ENCODE measurements at regions of chr2 and their contacts with region 1.

Region 1: DNA sequence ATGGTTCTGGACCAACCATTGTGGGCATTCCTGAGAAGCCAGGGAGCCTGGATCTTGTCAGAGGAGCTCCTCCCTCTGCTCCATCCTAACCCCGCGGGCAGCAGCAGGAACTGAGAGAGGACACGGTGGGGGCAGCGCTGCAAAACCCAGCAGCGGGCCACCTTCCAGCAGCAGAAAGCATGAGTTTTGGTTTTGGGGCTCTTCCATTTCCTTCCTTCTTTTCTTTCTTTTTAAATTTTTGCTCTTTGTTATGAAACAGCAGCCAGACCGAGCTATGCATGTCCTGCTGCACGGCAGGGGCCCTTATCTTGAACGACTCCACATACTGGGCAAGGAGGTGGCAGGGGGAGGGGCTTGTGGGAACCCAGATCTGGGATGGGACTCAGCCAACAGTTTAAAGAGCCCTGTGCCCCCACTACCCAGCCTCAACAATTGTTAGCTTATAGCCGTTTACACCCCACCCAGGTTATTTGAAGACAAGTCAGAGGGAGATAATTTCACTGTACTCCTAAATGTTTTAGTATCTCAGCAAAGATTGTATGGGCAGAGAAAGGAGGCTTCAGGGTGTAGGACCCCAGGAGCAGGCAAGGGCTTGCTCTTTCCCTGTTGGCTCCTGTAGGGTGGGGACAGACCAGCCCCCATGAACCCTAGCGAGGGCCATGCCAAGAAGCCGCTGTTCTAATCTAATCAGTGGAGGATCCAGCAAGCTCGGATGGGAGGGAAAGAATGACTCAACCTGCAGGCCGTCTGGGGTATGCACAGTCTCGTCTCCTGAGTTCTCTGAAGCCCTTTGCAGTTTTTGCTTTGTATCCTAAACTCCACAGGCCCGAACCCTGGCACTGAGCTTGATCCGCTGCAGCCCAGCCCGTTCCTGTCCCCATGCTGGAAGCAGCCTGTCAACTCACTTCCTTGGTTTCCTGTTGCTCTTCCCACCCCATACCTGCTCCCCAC is 75.3 kb downstream of the LRRFIP1 start:
- DNase-seq: peak in 1 of 10 donors; percentile 39
- ATAC-seq: peak; percentile 25 to 31
- H3K4me3 Mint-ChIP-seq: peak overlapping the region; percentile 73 to 92 (median 83)
- H3K27ac Mint-ChIP-seq: peak overlapping the region; percentile 88 to 97 (median 95)
- H3K4me1 Mint-ChIP-seq: peaks cover 57 to 99% (median 96%) of the 10 kb centered on the region in 4 donors
- H3K27me3 Mint-ChIP-seq: no peaks in the 10 kb centered on the region

Region 2: DNA sequence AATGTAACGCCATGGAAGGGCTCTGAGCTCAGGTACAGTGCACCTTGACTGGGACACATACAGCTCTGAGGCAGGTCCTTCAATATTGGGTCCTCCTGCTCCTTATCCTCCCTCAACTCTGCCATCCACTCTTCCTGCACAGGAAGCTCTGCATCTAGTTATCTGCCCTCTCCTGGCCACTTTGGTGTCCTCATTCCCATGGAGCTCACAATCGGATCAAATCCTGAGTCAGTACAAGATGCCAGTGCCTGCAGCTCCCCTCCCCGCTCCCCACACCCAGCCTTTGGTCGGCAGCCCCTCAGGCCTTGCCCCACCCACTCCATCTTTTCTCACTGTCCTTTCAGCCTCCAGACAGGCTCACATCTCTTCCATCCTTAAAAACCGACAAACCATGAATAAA is 17.3 kb before region 1 on chr2:
- POLR2A ChIA-PET with region 1: interaction called, 14 read pairs
- DNase-seq: no peak
- ATAC-seq: no peak
- H3K4me3 Mint-ChIP-seq: no peak overlapping the region
- H3K27ac Mint-ChIP-seq: peak overlapping the region; percentile 19 to 100 (median 98)
- H3K4me1 Mint-ChIP-seq: peaks cover 18 to 58% (median 46%) of the 10 kb centered on the region in 4 donors
- H3K27me3 Mint-ChIP-seq: no peaks in the 10 kb centered on the region

Region 3: DNA sequence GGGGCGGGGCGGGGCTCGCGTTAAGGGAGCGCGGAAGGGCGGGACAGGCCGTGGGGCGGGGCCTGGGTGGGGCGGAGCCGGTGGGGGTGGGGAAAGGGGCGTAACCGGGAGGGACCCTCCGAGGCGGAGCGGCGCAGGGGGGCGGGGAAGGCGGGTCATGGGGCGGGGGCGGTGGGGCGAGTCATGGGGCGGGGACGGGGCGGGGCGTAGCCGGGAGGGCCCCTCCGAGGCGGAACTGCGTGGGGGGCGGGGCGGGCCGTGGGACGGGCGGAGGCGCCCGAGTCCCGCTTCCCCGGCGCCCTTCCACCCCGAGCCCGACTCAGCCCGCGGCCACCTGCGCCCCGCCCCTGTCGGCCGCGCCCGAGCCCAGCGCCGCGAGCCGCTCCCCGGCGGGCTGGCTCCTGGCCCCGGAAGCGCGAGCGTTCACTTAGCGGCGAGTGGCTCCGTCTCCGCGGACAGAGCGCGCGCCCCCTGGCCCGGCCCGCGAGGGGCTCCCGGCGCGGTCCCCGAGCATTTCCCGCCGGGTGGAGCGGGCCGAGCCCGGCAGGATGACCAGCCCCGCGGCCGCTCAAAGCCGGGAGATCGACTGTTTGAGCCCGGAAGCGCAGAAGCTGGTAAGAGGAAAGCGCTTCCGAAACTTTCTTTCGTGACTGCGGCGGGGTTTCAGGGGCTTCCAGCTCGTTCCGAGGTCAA is 10.7 kb before region 1 on chr2:
- POLR2A ChIA-PET with region 1: interaction called, 14 read pairs
- DNase-seq: peak; percentile 81 to 99 (median 91)
- ATAC-seq: peak; percentile 57 to 60
- H3K4me3 Mint-ChIP-seq: peak overlapping the region; percentile 83 to 98 (median 92)
- H3K27ac Mint-ChIP-seq: peak overlapping the region in 9 of 10 donors; percentile 91 to 100 (median 95)
- H3K4me1 Mint-ChIP-seq: peaks cover 39 to 82% (median 78%) of the 10 kb centered on the region in 4 donors
- H3K27me3 Mint-ChIP-seq: no peaks in the 10 kb centered on the region